GM23248 (cell line): ENCODE measurements at regions of chr7 and their contacts with region 1.

Region 1: GRCh38 chr7:128381161-128381821 is 19.8 kb upstream of the PRRT4 start:
- DNase-seq: peak; percentile 49
- H3K4me3 ChIP-seq: no peak overlapping the region
- H3K27ac ChIP-seq: no peak overlapping the region
- H3K4me1 ChIP-seq: no peaks in the 10 kb centered on the region
- H3K27me3 ChIP-seq: 0 out of 2 replicates have a peak, but pooled peaks cover 8% of the 10 kb centered on the region

Region 2: GRCh38 chr7:127968547-127968946 is 412.7 kb before region 1 on chr7:
- in situ Hi-C with region 1: no loop called
- DNase-seq: no peak
- H3K4me3 ChIP-seq: no peak overlapping the region
- H3K27ac ChIP-seq: no peak overlapping the region
- H3K4me1 ChIP-seq: no peaks in the 10 kb centered on the region
- H3K27me3 ChIP-seq: no peaks in the 10 kb centered on the region

Region 3: GRCh38 chr7:128099204-128099671 is 282.1 kb before region 1 on chr7:
- in situ Hi-C with region 1: no loop called
- DNase-seq: peak; percentile 71
- H3K4me3 ChIP-seq: no peak overlapping the region
- H3K27ac ChIP-seq: no peak overlapping the region
- H3K4me1 ChIP-seq: no peaks in the 10 kb centered on the region
- H3K27me3 ChIP-seq: no peaks in the 10 kb centered on the region

Region 4: GRCh38 chr7:128347647-128348097 is 33.6 kb before region 1 on chr7:
- in situ Hi-C with region 1: loop called (anchors 5 kb)
- DNase-seq: peak; percentile 68
- H3K4me3 ChIP-seq: no peak overlapping the region
- H3K27ac ChIP-seq: no peak overlapping the region
- H3K4me1 ChIP-seq: peaks cover 3% of the 10 kb centered on the region
- H3K27me3 ChIP-seq: peaks cover 41% of the 10 kb centered on the region